ENCODE measurements at regions of chr11 and their contacts with region 1.

Region 1: DNA sequence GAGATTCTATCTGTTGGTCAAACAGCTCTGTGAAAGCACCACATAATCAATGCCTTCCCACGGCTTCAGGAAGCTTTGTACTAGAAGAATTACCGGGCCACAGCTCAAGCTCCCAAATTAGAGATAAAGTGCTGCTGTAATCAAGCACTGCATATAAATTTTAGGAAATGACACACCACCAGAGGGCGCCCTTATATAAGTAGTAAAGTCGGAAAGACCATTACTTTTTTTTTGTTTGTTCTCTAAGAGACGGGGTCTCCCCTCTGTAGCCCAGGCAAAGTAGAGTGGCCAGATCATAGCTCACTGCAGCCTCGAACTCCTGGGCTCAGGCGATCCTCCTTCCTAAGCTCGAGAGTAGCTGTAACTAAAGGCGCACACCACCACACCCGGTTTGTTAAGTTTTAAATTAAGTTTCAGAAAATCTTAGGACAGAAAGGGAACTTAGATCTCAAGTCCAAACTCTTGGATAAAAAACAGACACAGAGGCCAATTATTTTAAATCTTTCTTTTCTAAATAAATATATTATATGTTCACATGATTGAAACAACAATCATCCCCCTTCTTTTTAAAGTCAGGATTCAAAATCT is 32.6 kb downstream of the PRCP start:
- DNase-seq: peak; percentile 37 to 88 (median 70)
- ATAC-seq: peak; percentile 66
- H3K4me3 ChIP-seq: no peak overlapping the region
- H3K4me3 Mint-ChIP-seq: no peak overlapping the region
- H3K27ac ChIP-seq: no peak overlapping the region
- H3K27ac Mint-ChIP-seq: no peak overlapping the region
- H3K4me1 ChIP-seq: peaks cover 5% of the 10 kb centered on the region
- H3K4me1 Mint-ChIP-seq: peaks cover 11% of the 10 kb centered on the region
- H3K27me3 ChIP-seq: no peaks in the 10 kb centered on the region
- H3K27me3 Mint-ChIP-seq: no peaks in the 10 kb centered on the region
- CTCF ChIP-seq: peak; percentile 80

Region 2: DNA sequence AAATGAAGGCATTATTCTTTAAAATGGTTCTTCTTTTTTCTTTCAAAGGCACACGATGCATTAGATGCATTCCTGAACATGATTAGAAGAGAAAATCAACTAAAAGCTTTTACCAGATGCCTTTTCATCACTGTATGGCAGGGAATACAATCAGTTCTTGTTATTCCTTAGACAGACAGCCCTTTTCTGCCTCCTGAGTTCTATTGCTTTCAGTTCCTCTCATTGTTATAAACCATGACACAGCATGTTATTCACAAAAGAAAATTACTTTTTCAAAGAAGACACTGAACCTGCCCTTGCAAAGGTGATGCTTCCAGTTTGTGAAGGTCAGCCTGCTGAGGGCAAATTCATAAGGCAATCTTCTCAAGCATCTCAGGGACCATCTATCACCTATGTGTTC is 204.1 kb before region 1 on chr11:
- CTCF ChIA-PET with region 1: no interaction called
- POLR2A ChIA-PET with region 1: no interaction called
- intact Hi-C with region 1: no loop called
- DNase-seq: no peak
- ATAC-seq: no peak
- H3K4me3 ChIP-seq: no peak overlapping the region
- H3K4me3 Mint-ChIP-seq: no peak overlapping the region
- H3K27ac ChIP-seq: no peak overlapping the region
- H3K27ac Mint-ChIP-seq: no peak overlapping the region
- H3K4me1 ChIP-seq: no peaks in the 10 kb centered on the region
- H3K4me1 Mint-ChIP-seq: no peaks in the 10 kb centered on the region
- H3K27me3 ChIP-seq: peaks cover 0 to 3% of the 10 kb centered on the region in 2 experiments
- H3K27me3 Mint-ChIP-seq: peaks cover 14% of the 10 kb centered on the region
- CTCF ChIP-seq: no peak

Region 3: DNA sequence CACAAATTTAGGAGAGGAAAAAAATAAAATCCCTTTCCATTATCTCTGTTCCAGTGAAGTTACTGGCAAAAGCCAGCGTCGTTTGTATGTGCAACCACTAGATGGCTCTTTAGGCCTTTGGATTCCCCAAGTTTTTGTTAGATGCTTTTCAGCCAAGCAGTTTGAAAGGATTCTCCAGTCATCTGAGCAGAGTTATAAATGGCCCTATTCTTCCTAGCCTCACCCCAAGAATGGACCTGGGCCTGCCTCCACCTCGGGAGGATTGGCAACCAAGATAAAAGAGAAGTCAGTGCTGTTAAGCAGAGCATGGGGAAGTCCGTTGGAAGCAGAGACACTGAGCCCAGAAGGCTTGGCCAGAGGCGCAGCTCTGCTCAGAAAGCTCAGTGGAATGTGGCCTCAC is 149.3 kb before region 1 on chr11:
- CTCF ChIA-PET with region 1: no interaction called
- POLR2A ChIA-PET with region 1: no interaction called
- intact Hi-C with region 1: loop called (anchors 1 kb)
- DNase-seq: peak in 5 of 14 experiments; percentile 10 to 51 (median 37)
- ATAC-seq: peak; percentile 59
- H3K4me3 ChIP-seq: no peak overlapping the region
- H3K4me3 Mint-ChIP-seq: no peak overlapping the region
- H3K27ac ChIP-seq: no peak overlapping the region
- H3K27ac Mint-ChIP-seq: no peak overlapping the region
- H3K4me1 ChIP-seq: no peaks in the 10 kb centered on the region
- H3K4me1 Mint-ChIP-seq: no peaks in the 10 kb centered on the region
- H3K27me3 ChIP-seq: no peaks in the 10 kb centered on the region
- H3K27me3 Mint-ChIP-seq: peaks cover 10% of the 10 kb centered on the region
- CTCF ChIP-seq: peak; percentile 67

Region 4: DNA sequence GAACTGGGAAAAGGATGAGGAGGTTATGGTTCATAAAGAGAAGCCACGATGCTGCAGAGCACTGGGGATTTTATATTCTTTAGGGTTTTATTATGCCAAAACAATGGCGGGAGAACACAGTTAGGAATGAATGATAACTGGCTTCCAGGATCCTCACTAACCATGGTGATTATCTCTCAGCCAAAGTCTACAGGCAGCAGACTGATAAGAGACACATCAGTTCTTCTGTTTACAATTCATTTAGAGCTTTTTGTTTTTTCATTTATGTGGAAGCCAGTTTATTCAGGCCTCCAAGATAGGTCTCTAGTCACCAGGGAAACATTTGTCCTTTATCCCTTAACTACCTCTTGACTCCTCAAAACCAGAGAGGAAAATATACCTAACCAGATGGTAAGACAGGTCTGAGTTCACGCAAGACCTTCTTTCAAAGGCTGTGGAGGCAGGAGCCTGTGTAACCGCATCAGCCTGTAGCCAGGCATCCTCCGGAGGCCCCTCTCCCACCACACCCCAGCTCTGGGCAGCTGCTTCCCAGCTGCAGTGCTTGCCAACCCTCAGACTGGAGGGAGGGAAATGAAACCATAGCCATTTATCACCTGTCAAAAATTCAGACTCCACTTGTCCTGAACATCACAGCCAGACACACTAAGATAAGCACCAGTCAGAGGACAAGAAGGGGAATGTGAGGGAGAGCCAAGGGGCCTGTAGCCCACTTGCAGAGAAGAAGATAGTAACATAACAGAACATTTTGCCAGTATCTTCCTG is 76.7 kb before region 1 on chr11:
- CTCF ChIA-PET with region 1: no interaction called
- POLR2A ChIA-PET with region 1: no interaction called
- intact Hi-C with region 1: no loop called
- DNase-seq: no peak
- ATAC-seq: no peak
- H3K4me3 ChIP-seq: no peak overlapping the region
- H3K4me3 Mint-ChIP-seq: no peak overlapping the region
- H3K27ac ChIP-seq: no peak overlapping the region
- H3K27ac Mint-ChIP-seq: no peak overlapping the region
- H3K4me1 ChIP-seq: no peaks in the 10 kb centered on the region
- H3K4me1 Mint-ChIP-seq: no peaks in the 10 kb centered on the region
- H3K27me3 ChIP-seq: no peaks in the 10 kb centered on the region
- H3K27me3 Mint-ChIP-seq: peaks cover 4% of the 10 kb centered on the region
- CTCF ChIP-seq: no peak

Region 5: DNA sequence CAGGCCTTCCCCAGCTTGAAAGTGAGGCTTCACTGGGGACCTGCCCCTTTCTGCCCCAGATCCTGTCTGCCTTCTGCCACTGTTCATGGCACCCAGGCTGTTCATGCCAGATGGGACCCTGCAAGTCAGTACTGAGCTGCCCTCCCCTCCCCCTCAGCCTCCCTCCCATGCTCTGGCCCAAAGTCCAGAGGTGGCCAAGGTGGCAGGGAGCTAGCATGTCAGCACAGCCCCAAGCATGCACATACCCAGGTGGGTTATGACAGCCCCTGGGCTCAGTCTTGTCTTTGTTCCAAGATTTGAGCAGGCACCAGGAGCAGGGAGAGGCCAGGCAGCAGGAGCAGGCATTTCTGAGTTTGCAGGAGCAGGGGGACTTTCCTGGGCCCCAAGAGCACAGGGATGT is 78.1 kb after region 1 on chr11:
- CTCF ChIA-PET with region 1: no interaction called
- POLR2A ChIA-PET with region 1: no interaction called
- intact Hi-C with region 1: no loop called
- DNase-seq: no peak
- ATAC-seq: no peak
- H3K4me3 ChIP-seq: no peak overlapping the region
- H3K4me3 Mint-ChIP-seq: no peak overlapping the region
- H3K27ac ChIP-seq: no peak overlapping the region
- H3K27ac Mint-ChIP-seq: no peak overlapping the region
- H3K4me1 ChIP-seq: no peaks in the 10 kb centered on the region
- H3K4me1 Mint-ChIP-seq: peaks cover 23% of the 10 kb centered on the region
- H3K27me3 ChIP-seq: no peaks in the 10 kb centered on the region
- H3K27me3 Mint-ChIP-seq: no peaks in the 10 kb centered on the region
- CTCF ChIP-seq: no peak

Region 6: GRCh38 chr11:82988936-82989627 is 121.5 kb after region 1 on chr11:
- CTCF ChIA-PET with region 1: interaction called, 3 read pairs
- POLR2A ChIA-PET with region 1: no interaction called
- intact Hi-C with region 1: loop called (anchors 2 to 5 kb)
- DNase-seq: no peak
- ATAC-seq: no peak
- H3K4me3 ChIP-seq: no peak overlapping the region
- H3K4me3 Mint-ChIP-seq: no peak overlapping the region
- H3K27ac ChIP-seq: no peak overlapping the region
- H3K27ac Mint-ChIP-seq: no peak overlapping the region
- H3K4me1 ChIP-seq: no peaks in the 10 kb centered on the region
- H3K4me1 Mint-ChIP-seq: peaks cover 9% of the 10 kb centered on the region
- H3K27me3 ChIP-seq: no peaks in the 10 kb centered on the region
- H3K27me3 Mint-ChIP-seq: no peaks in the 10 kb centered on the region
- CTCF ChIP-seq: no peak

Region 7: GRCh38 chr11:83115551-83115950 is 248.0 kb after region 1 on chr11:
- CTCF ChIA-PET with region 1: no interaction called
- POLR2A ChIA-PET with region 1: no interaction called
- intact Hi-C with region 1: no loop called
- DNase-seq: no peak
- ATAC-seq: no peak
- H3K4me3 ChIP-seq: no peak overlapping the region
- H3K4me3 Mint-ChIP-seq: peak overlapping the region; percentile 75
- H3K27ac ChIP-seq: no peak overlapping the region
- H3K27ac Mint-ChIP-seq: peak overlapping the region; percentile 72
- H3K4me1 ChIP-seq: peaks cover 34% of the 10 kb centered on the region
- H3K4me1 Mint-ChIP-seq: peaks cover 52% of the 10 kb centered on the region
- H3K27me3 ChIP-seq: no peaks in the 10 kb centered on the region
- H3K27me3 Mint-ChIP-seq: no peaks in the 10 kb centered on the region
- CTCF ChIP-seq: no peak

Region 8: DNA sequence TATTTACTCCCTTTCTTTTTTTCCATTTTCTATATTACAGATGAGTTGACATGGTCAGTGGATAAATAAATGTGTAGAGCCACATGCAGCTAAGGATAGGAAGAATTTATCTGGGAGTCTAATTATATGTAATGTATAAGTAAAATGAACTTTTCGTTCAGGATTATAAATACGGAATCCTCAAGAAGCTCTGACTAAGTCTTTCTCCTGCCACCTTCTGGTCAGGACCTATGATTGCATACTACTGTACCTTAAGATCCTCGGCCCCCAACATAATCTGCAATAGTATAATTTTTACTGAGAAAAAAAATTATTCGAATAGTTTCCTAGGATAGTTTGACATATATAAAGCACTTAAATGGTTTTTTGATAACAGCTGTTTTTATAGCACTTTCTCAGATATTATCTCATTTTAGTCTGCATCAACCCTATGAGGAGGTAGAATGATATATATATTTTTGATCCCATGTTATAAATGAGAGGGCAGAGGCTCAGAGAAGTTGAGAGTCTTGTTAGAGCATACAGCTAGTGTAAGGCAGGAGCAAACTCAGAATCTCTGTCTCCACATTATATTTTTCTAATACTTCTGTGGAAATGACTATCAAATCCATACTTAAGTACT is 382.5 kb after region 1 on chr11:
- CTCF ChIA-PET with region 1: interaction called, 14 read pairs
- POLR2A ChIA-PET with region 1: interaction called, 5 read pairs
- intact Hi-C with region 1: loop called (anchors 1 to 2 kb)
- DNase-seq: peak in 4 of 14 experiments; percentile 21 to 70 (median 62)
- ATAC-seq: peak; percentile 85
- H3K4me3 ChIP-seq: no peak overlapping the region
- H3K4me3 Mint-ChIP-seq: no peak overlapping the region
- H3K27ac ChIP-seq: no peak overlapping the region
- H3K27ac Mint-ChIP-seq: no peak overlapping the region
- H3K4me1 ChIP-seq: no peaks in the 10 kb centered on the region
- H3K4me1 Mint-ChIP-seq: no peaks in the 10 kb centered on the region
- H3K27me3 ChIP-seq: no peaks in the 10 kb centered on the region
- H3K27me3 Mint-ChIP-seq: no peaks in the 10 kb centered on the region
- CTCF ChIP-seq: peak; percentile 85

Region 9: GRCh38 chr11:83819933-83820549 is 952.5 kb after region 1 on chr11:
- CTCF ChIA-PET with region 1: interaction called, 5 read pairs
- POLR2A ChIA-PET with region 1: no interaction called
- intact Hi-C with region 1: loop called (anchors 1 to 5 kb)
- DNase-seq: peak in 3 of 14 experiments; percentile 22 to 33 (median 32)
- ATAC-seq: no peak
- H3K4me3 ChIP-seq: no peak overlapping the region
- H3K4me3 Mint-ChIP-seq: no peak overlapping the region
- H3K27ac ChIP-seq: no peak overlapping the region
- H3K27ac Mint-ChIP-seq: no peak overlapping the region
- H3K4me1 ChIP-seq: no peaks in the 10 kb centered on the region
- H3K4me1 Mint-ChIP-seq: no peaks in the 10 kb centered on the region
- H3K27me3 ChIP-seq: no peaks in the 10 kb centered on the region
- H3K27me3 Mint-ChIP-seq: no peaks in the 10 kb centered on the region
- CTCF ChIP-seq: peak; percentile 32